Mammary epithelial cell (primary cell): ENCODE measurements at regions of chr1 and their contacts with region 1.

Region 1: DNA sequence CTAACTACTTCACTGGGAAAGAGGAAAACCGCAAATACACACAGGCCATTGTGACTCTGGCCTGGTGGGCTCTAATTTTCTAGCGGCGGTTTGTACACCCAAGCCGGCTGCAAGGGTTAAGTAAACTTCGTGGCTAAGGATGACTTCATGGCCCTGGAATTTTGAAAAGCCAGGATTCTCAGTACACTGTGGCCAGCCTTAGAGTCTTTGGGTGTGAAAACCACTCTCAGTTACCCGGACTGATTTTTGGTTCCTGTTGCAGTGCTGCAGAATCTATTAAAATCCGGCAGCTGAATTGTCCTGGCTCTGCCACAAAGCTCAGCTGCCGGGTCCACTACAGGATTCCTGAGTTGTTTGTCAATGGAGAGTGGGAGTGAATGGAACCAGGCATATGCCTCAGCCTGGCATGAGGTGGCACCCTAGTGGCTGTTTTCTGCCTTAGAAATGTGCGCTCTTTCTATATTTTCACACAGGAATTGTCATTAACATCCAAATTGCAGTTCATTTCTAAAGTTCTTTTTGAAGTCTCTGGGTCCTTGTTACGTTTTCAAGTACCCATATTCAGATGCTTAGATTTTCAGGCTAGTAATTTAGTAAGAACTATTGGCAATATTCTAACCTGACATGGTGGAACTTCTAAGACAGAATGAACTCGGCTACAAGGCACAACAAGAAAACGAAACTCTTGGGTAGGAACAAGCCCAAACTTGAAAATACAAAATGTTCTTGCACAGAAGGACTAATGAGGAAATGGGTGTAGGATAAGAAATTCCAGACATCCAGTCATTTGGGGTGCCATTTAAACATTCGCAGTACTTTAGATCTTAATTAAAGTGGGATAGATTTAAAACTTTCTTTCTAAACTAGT is 255.9 kb downstream of the NFIA start:
- DNase-seq: peak; percentile 94
- H3K4me3 ChIP-seq: peak overlapping the region; percentile 27 to 49 (median 45)
- H3K27ac ChIP-seq: peak overlapping the region; percentile 95
- H3K4me1 ChIP-seq: peaks cover 24% of the 10 kb centered on the region
- H3K27me3 ChIP-seq: no peaks in the 10 kb centered on the region
- CTCF ChIP-seq: peak; percentile 86 to 91

Region 2: DNA sequence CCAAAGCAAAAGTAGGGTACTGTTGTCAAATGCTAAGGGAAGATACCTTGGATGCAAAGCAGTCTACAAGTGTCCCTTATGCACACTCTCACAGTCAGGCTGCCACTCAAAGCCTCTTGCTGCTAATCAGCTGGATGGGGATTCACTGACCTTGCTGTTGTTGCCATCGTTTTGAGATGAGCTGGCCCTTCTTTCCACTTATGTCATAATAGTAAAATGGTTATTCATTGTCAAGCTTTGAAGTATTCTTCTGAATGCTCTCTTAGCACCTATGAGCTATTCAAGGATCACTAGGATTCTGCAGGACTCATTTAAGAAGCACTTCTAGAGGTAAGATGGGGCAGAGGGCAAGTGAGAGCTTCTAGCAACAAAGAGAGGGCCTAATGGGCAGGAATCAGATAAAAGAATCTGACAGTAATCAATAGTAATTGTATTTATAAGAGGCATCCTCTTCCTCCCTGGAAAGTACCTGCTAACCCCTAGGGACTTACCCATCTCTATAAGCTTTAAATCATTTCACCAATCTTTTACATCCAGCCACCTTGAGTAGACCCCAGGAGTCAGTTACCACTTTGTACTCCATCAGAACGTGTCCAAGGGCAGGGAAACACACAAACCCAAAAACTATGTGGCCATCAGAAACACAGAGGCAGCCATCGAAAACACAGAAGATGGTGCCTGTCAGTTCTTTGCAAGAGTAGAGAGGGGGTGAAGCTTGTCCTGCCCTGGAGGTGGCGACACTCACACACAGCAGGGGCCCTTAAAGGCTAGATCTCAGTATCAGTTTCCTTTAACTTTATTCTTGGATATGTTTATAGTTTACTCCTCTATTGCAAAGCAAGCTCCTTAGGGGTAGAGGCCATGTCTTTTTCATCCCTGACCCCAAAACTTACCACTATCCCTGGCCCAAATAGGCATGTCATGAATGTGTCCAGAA is 359.5 kb before region 1 on chr1:
- CTCF ChIA-PET with region 1: interaction called, 4 read pairs
- dilution Hi-C with region 1: no loop called
- in situ Hi-C with region 1: no loop called
- intact Hi-C with region 1: loop called (anchors 2 kb)
- DNase-seq: peak; percentile 38
- H3K4me3 ChIP-seq: no peak overlapping the region
- H3K27ac ChIP-seq: no peak overlapping the region
- H3K4me1 ChIP-seq: peaks cover 4% of the 10 kb centered on the region
- H3K27me3 ChIP-seq: no peaks in the 10 kb centered on the region
- CTCF ChIP-seq: peak; percentile 89 to 90

Region 3: GRCh38 chr1:61017651-61018050 is 320.6 kb before region 1 on chr1:
- CTCF ChIA-PET with region 1: no interaction called
- dilution Hi-C with region 1: no loop called
- in situ Hi-C with region 1: no loop called
- intact Hi-C with region 1: no loop called
- DNase-seq: no peak
- H3K4me3 ChIP-seq: no peak overlapping the region
- H3K27ac ChIP-seq: no peak overlapping the region
- H3K4me1 ChIP-seq: no peaks in the 10 kb centered on the region
- H3K27me3 ChIP-seq: peaks cover 4% of the 10 kb centered on the region
- CTCF ChIP-seq: no peak

Region 4: DNA sequence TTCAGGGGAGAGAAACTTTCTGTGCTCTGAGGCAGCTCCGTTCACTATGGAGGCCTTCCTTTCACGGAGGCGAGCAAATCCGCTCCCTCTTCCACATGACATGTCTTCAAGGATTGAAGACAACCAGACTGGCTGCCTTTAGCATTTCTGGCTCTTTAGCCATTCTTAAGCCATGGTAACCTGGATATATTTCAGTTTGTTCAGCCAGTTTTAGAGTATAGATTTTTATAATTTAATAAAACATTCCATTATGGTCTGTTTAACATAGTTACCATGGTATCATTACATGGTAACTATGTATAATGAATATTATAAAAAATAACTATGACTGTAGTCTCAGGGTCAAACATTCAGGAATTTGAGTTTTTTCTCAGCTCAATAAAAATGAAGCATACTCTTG is 310.1 kb before region 1 on chr1:
- CTCF ChIA-PET with region 1: no interaction called
- dilution Hi-C with region 1: no loop called
- in situ Hi-C with region 1: no loop called
- intact Hi-C with region 1: no loop called
- DNase-seq: no peak
- H3K4me3 ChIP-seq: no peak overlapping the region
- H3K27ac ChIP-seq: no peak overlapping the region
- H3K4me1 ChIP-seq: no peaks in the 10 kb centered on the region
- H3K27me3 ChIP-seq: peaks cover 2% of the 10 kb centered on the region
- CTCF ChIP-seq: no peak

Region 5: DNA sequence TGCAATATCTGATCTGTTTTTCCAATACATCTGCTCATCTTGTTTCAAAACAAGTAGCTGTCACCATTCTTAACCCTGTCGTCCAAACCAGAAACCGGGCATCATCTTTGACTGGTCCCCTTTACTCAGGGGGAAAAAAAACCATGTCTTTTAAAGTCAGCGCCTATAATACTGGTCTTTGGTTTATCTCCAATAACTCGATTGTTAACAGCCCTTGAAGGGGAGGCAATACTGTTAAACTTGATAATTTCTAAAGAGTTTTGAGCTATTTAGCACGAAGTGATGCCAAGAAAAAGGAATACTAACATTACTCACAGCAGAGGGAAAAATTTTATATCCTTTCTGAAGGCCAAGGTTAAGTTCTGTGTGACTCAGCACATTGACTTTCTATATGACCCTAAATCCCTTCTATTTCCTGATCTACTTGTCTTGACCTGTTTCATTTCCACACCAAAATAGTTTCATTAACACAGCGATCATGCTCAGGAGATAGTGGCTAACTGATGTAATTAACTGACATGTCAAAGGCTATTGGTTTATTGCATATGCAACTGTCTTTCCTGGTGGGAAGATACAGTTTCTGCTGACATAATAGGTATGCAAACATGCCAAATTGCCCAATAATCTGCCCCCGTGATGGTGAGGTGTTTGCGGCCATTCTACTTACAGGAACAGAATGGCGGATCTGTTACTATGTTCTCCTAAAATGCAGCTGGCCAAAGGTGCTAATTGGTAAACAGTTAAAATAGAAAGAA is 196.8 kb before region 1 on chr1:
- CTCF ChIA-PET with region 1: no interaction called
- dilution Hi-C with region 1: no loop called
- in situ Hi-C with region 1: no loop called
- intact Hi-C with region 1: loop called (anchors 2 kb)
- DNase-seq: peak; percentile 94
- H3K4me3 ChIP-seq: no peak overlapping the region
- H3K27ac ChIP-seq: peak overlapping the region; percentile 77
- H3K4me1 ChIP-seq: peaks cover 42% of the 10 kb centered on the region
- H3K27me3 ChIP-seq: no peaks in the 10 kb centered on the region
- CTCF ChIP-seq: no peak

Region 6: DNA sequence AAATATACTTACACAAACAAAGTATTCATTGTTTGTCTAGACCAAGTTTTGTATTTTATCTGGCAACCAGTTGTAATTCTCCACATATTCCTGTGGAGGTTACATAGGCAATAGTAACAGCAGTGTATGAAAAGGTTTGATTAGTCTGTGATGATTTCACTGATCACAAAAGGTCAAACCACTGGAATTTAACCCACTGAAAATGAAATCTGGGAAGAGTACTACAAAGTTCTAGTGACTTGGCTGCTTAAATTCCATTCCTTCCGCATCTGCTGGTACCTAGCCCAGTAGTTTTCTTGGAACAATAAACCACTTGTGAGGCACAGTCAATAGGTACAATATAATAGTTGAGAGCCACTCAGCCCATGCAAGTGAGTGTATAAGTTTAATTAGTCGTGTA is 50.5 kb before region 1 on chr1:
- CTCF ChIA-PET with region 1: no interaction called
- dilution Hi-C with region 1: loop called (anchors 5 kb)
- in situ Hi-C with region 1: no loop called
- intact Hi-C with region 1: loop called (anchors 1 kb)
- DNase-seq: peak; percentile 95
- H3K4me3 ChIP-seq: no peak overlapping the region
- H3K27ac ChIP-seq: peak overlapping the region; percentile 96
- H3K4me1 ChIP-seq: peaks cover 41% of the 10 kb centered on the region
- H3K27me3 ChIP-seq: no peaks in the 10 kb centered on the region
- CTCF ChIP-seq: peak in 1 of 2 donors; percentile 5

Region 7: GRCh38 chr1:61368876-61369275 is 30.7 kb after region 1 on chr1:
- CTCF ChIA-PET with region 1: no interaction called
- dilution Hi-C with region 1: no loop called
- in situ Hi-C with region 1: no loop called
- intact Hi-C with region 1: no loop called
- DNase-seq: no peak
- H3K4me3 ChIP-seq: no peak overlapping the region
- H3K27ac ChIP-seq: no peak overlapping the region
- H3K4me1 ChIP-seq: no peaks in the 10 kb centered on the region
- H3K27me3 ChIP-seq: no peaks in the 10 kb centered on the region
- CTCF ChIP-seq: no peak

Region 8: GRCh38 chr1:61588736-61589672 is 250.8 kb after region 1 on chr1:
- CTCF ChIA-PET with region 1: no interaction called
- dilution Hi-C with region 1: no loop called
- in situ Hi-C with region 1: no loop called
- intact Hi-C with region 1: loop called (anchors 1 kb)
- DNase-seq: peak; percentile 63
- H3K4me3 ChIP-seq: no peak overlapping the region
- H3K27ac ChIP-seq: no peak overlapping the region
- H3K4me1 ChIP-seq: peaks cover 11% of the 10 kb centered on the region
- H3K27me3 ChIP-seq: no peaks in the 10 kb centered on the region
- CTCF ChIP-seq: peak; percentile 91 to 92